Tibial artery (tissue), 4 donors: ENCODE measurements at regions of chr19 and their contacts with region 1.

Region 1: DNA sequence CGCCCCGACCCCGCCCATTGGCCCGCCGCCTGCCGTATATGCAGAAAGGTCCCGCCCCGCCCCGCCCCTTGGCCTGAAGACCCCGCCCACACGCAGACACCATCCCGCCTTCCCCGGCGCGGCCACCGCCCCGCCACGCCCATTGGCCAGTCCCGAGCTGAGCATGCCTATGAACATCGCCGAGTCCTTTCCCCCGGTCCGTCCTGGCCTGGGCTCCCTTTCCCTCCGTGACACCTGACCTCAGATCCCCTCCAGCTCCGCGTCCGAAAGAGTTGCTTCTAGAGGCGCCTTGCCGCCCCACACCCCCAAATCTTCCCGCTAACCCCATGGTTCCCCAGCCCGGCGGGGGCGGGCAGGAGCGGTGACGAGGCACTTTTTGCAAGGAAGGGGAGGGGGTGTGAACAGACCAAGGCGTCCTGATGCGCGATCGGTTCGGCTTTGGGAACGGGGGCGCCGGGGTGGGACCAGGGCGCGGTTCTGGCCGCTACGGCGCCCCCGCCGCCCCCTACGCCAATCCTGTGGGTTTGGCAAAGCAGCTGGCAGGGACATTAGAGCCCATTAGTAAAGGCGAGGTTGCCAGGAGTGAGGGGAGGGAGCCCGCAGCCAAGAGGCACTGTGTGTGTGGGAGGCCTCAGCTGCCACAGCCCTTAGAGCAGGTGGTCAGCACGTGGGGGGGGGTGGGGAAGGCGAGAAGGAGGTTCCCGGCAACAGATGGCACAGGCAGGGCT is 406 bp upstream of the NUMBL start:
- DNase-seq: peak; percentile 96 to 97
- H3K4me3 ChIP-seq: peak overlapping the region; percentile 74 to 86
- H3K27ac ChIP-seq: peak overlapping the region; percentile 90 to 95
- H3K4me1 ChIP-seq: peaks cover 4 to 44% (median 29%) of the 10 kb centered on the region in 4 donors
- H3K27me3 ChIP-seq: no peaks in the 10 kb centered on the region
- CTCF ChIP-seq: no peak

Region 2: DNA sequence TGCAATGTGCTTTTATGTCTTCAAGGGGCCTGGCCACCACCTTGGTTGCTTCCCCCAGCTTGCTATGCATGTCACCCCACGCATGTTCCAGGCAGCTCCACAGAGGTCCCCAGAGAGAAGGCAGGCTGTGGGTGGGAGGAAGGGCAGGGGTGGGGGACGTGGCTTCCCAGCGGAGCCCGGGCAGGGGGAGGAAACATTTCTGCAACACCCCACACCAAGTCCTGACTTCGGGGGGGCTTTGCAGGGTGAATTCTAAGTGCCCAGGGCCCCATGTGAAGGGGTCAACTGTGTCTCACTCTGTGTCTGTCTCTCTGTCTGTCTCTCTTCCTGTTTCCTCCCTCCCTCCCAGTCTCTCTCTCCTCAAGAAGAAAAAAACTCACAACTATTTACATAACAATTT is 50.1 kb before region 1 on chr19:
- intact Hi-C with region 1: loop called (anchors 2 kb)
- DNase-seq: peak in 1 of 2 donors; percentile 83
- H3K4me3 ChIP-seq: no peak overlapping the region
- H3K27ac ChIP-seq: peak overlapping the region; percentile 73 to 78
- H3K4me1 ChIP-seq: peaks cover 0 to 62% (median 36%) of the 10 kb centered on the region in 4 donors
- H3K27me3 ChIP-seq: no peaks in the 10 kb centered on the region
- CTCF ChIP-seq: no peak

Region 3: GRCh38 chr19:40714441-40715299 is 23.8 kb after region 1 on chr19:
- intact Hi-C with region 1: loop called (anchors 2 kb)
- DNase-seq: peak; percentile 93 to 97
- H3K4me3 ChIP-seq: peak overlapping the region; percentile 78 to 81
- H3K27ac ChIP-seq: peak overlapping the region; percentile 96 to 97
- H3K4me1 ChIP-seq: peaks cover 0 to 39% (median 27%) of the 10 kb centered on the region in 4 donors
- H3K27me3 ChIP-seq: no peaks in the 10 kb centered on the region
- CTCF ChIP-seq: peak in 1 of 2 experiments; percentile 25

Region 4: DNA sequence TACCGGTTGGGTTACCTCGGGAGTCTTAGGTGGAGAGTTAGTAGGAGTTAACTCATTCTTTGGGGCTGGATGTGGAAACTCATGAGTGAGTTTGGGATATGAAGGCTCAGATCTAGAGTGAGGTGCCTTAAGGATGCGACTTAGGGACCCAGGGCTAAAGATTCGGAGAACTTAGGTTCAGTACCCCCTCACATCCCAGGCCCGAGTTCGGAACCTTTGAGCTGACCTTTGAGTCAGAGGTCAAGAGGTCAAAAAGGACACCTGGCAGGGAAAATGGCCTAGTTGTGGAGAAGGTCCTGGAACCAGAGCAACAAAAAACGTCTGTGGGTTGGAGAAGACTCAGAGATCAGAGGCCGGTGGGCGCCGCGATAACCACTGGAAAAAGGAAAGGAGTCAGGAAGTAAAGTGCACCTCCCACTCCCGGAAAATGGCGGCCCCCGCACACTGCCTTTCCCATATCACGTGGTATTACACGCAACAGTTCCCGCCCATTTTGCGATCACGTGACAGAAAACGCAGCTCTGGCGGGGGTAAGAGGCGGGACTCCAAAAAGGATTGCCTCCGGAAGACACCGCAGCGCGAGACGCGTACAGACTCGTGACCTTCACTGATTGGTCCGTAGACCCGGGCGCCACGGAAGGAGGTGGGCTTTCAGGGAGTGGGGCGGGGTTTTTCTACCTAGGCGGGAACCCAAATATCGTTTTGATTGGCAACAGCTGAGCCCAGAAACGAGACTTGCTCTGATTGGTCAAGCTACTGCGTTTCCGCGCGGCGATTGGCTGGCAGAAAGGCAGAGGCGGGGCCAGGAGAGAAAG is 59.4 kb after region 1 on chr19 and contains the start of gene ACTMAP:
- intact Hi-C with region 1: loop called (anchors 2 kb)
- DNase-seq: peak; percentile 100
- H3K4me3 ChIP-seq: peak within 1 kb of the TSS; percentile 63 to 65
- H3K27ac ChIP-seq: peak within 1 kb of the TSS; percentile 87 to 92
- H3K4me1 ChIP-seq: peaks cover 0 to 55% (median 42%) of the 10 kb centered on the region in 4 donors
- H3K27me3 ChIP-seq: no peaks in the 10 kb centered on the region
- CTCF ChIP-seq: peak in 1 of 2 experiments; percentile 25